ENCODE measurements at regions of chr13 and their contacts with region 1.

Region 1: DNA sequence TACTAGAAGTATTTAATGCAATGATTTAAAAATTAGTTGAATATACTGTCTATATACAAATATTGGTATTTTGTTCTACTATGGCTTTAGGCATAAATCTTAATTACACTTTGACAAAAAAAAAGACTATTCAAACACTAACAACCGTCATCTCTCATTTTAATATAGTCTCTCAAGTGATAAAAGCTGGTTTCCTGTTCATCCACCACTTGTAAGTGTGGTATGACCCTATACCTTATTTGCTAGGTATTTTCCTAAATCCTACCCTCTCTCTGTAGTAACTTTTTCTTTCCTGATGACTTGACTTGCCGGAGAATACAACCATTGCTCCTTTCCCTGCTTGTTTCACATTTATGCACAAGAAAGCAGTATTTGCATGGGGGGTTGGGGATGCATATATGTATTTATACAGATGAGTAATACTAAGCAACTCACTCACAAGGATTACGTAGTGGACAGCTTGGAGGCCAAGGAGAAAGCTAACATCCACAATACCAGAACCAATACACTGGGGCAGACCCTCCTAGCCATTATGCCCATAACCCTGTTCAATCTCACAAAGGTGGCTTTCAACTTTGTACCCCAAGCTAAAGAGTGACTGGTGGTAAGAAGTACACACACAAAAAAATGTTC is 12.7 kb upstream of the EFNB2 start:
- DNase-seq: no peak
- ATAC-seq: no peak
- H3K4me3 ChIP-seq: no peak overlapping the region
- H3K4me3 Mint-ChIP-seq: no peak overlapping the region
- H3K27ac ChIP-seq: no peak overlapping the region
- H3K27ac Mint-ChIP-seq: peak overlapping the region; percentile 6
- H3K4me1 ChIP-seq: no peaks in the 10 kb centered on the region
- H3K4me1 Mint-ChIP-seq: peaks cover 35% of the 10 kb centered on the region
- H3K27me3 ChIP-seq: no peaks in the 10 kb centered on the region
- H3K27me3 Mint-ChIP-seq: no peaks in the 10 kb centered on the region
- CTCF ChIP-seq: no peak

Region 2: DNA sequence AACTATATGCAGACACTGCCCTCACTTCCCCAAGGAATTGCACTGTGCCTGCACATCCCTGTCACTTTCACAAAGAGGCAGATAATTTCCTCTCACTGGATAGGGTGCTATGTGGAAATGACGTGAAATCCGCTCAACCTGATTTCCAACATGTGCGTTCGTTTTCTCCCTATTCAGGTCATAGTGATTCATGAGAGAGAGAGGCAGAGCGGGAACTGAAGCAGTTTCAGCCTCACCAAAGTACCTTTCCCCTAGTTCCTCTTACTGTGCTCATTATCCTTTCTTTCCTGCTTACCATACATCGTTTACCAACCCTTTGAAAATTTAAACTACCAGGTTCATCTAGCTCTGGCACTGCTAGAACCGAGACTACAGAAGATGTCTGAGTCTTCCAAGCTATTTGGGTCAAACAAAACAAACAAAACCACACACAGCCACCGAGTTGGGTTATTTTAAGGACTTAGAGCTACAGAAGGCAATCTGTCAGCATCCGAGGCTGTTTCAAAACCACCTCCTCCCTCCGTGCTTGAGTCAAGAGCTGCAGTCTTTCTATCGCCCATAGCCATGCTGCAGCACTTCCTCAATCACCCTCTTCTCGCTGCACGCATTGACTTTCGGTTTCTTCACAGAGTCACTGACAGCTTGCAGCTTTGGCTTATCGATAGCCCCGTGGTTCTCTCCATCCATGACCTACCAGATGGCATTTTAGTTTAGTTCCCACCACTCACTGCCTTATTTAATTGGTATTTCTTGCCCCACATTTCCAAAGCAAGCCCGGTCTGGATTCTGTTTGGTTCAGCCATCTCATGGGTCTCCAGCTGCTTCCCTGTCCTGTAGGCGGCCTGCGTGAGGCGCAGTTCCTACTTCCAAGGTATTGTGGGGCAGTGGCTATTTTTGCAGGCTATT is 1408.5 kb before region 1 on chr13:
- CTCF ChIA-PET with region 1: no interaction called
- POLR2A ChIA-PET with region 1: no interaction called
- intact Hi-C with region 1: loop called in 1 of 2 experiments (anchors 10 kb)
- DNase-seq: peak; percentile 18 to 82 (median 60)
- ATAC-seq: peak; percentile 92
- H3K4me3 ChIP-seq: peak overlapping the region; percentile 66 to 73
- H3K4me3 Mint-ChIP-seq: peak overlapping the region; percentile 94
- H3K27ac ChIP-seq: peak overlapping the region; percentile 78 to 94
- H3K27ac Mint-ChIP-seq: peak overlapping the region; percentile 95
- H3K4me1 ChIP-seq: peaks cover 10% of the 10 kb centered on the region
- H3K4me1 Mint-ChIP-seq: peaks cover 21% of the 10 kb centered on the region
- H3K27me3 ChIP-seq: no peaks in the 10 kb centered on the region
- H3K27me3 Mint-ChIP-seq: no peaks in the 10 kb centered on the region
- CTCF ChIP-seq: no peak

Region 3: GRCh38 chr13:106567474-106568298 is 19.5 kb after region 1 on chr13 and contains the start of gene ARGLU1:
- CTCF ChIA-PET with region 1: no interaction called
- POLR2A ChIA-PET with region 1: interaction called, 3 read pairs
- intact Hi-C with region 1: loop called in 1 of 2 experiments (anchors 2 kb)
- DNase-seq: peak; percentile 92 to 98 (median 95)
- ATAC-seq: peak; percentile 81
- H3K4me3 ChIP-seq: peak within 1 kb of the TSS; percentile 79 to 91
- H3K4me3 Mint-ChIP-seq: peak within 1 kb of the TSS; percentile 98
- H3K27ac ChIP-seq: peak within 1 kb of the TSS; percentile 91 to 94
- H3K27ac Mint-ChIP-seq: peak within 1 kb of the TSS; percentile 95
- H3K4me1 ChIP-seq: peaks cover 41% of the 10 kb centered on the region
- H3K4me1 Mint-ChIP-seq: peaks cover 58% of the 10 kb centered on the region
- H3K27me3 ChIP-seq: no peaks in the 10 kb centered on the region
- H3K27me3 Mint-ChIP-seq: no peaks in the 10 kb centered on the region
- CTCF ChIP-seq: no peak
- total RNA-seq, gene ARGLU1: 130 to 145 TPM